Activated naive CD4-positive, alpha-beta T cell treated with anti-CD3 and anti-CD28 coated beads for 36 hours (primary cell): ENCODE measurements at regions of chr1 and their contacts with region 1.

Region 1: GRCh38 chr1:43073490-43074230 is 98.4 kb downstream of the EBNA1BP2 start:
- DNase-seq: peak; percentile 87
- H3K4me3 Mint-ChIP-seq: no peak overlapping the region
- H3K27ac Mint-ChIP-seq: peak overlapping the region; percentile 28
- H3K4me1 Mint-ChIP-seq: peaks cover 4% of the 10 kb centered on the region
- H3K27me3 Mint-ChIP-seq: no peaks in the 10 kb centered on the region

Region 2: DNA sequence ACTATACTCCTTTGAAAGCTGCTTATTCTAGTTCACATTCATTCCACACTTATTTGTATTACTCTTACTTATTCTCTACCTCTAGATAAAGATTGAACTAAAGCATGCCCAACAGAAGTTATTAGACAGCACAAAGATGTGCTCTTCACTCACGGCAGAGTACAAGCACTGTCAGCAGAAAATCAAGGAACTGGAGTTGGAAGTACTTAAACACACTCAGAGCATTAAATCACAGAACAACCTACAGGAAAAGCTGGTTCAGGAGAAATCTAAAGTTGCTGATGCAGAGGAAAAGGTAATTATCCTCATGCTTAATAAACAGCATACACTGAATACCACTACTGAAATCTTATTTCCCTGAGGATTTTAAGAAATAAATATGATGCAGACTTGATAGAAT is 496.7 kb before region 1 on chr1:
- CTCF ChIA-PET with region 1: interaction called, 5 read pairs
- intact Hi-C with region 1: loop called (anchors 2 kb)
- DNase-seq: no peak
- H3K4me3 Mint-ChIP-seq: no peak overlapping the region
- H3K27ac Mint-ChIP-seq: no peak overlapping the region
- H3K4me1 Mint-ChIP-seq: no peaks in the 10 kb centered on the region
- H3K27me3 Mint-ChIP-seq: no peaks in the 10 kb centered on the region

Region 3: DNA sequence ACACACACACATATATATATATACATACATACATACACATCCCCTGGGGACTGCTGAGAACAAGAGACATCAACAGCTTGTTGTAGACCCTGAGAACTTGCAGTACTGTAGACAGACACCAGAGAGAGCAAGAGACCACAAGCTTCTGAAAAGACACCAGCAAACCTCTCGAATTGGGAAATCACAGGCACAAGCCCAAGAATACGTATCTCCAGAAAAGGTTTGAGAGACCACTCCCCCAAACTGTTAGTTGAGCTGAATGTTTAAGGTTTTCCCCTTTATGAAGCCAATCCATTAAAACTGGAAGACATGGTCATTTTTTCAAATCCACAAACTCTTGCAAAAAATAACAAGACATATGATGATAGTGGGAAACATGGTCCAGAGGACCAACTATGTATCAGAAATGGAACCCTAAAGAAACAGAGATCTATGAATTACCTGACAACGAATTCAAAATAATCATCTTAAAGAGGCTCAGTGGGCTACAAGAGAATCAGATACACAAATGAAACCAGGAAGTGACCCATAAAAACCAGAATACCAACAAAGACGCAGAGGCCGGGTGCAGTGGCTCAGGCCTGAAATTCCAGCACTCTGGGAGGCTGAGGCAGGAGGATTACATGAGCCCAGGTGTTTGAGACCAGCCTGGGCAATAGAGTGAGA is 160.1 kb before region 1 on chr1:
- CTCF ChIA-PET with region 1: interaction called, 441 read pairs
- intact Hi-C with region 1: loop called (anchors 1 kb)
- DNase-seq: peak; percentile 76
- H3K4me3 Mint-ChIP-seq: no peak overlapping the region
- H3K27ac Mint-ChIP-seq: no peak overlapping the region
- H3K4me1 Mint-ChIP-seq: peaks cover 2% of the 10 kb centered on the region
- H3K27me3 Mint-ChIP-seq: no peaks in the 10 kb centered on the region

Region 4: DNA sequence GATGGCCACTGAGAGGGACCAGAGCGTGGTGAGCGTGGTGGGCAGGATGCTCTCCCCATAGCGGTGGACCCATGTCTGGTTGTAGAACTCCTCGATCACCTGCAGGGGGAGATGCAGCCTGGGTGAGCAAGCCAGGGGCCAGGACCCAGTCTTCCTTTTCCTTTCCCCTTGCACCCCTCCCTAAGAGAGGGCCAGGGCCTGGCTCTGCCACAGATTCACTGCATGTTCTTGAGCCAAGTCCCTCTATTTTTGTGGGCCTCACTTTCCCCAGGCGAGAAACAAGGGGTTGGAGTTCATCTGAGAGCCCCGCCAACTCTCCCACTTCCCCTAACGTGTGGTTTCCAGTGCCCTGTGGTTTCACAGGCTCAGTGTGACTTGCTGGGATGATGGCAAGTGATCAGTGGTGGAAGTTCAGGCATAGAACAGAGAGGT is 142.5 kb before region 1 on chr1:
- CTCF ChIA-PET with region 1: interaction called, 441 read pairs
- intact Hi-C with region 1: loop called (anchors 1 kb)
- DNase-seq: peak; percentile 65
- H3K4me3 Mint-ChIP-seq: peak overlapping the region; percentile 60
- H3K27ac Mint-ChIP-seq: peak overlapping the region; percentile 97
- H3K4me1 Mint-ChIP-seq: peaks cover 57% of the 10 kb centered on the region
- H3K27me3 Mint-ChIP-seq: no peaks in the 10 kb centered on the region

Region 5: GRCh38 chr1:43007142-43007764 is 66.4 kb before region 1 on chr1:
- CTCF ChIA-PET with region 1: no interaction called
- intact Hi-C with region 1: no loop called
- DNase-seq: no peak
- H3K4me3 Mint-ChIP-seq: no peak overlapping the region
- H3K27ac Mint-ChIP-seq: no peak overlapping the region
- H3K4me1 Mint-ChIP-seq: no peaks in the 10 kb centered on the region
- H3K27me3 Mint-ChIP-seq: no peaks in the 10 kb centered on the region

Region 6: GRCh38 chr1:43035821-43036741 is 37.6 kb before region 1 on chr1:
- CTCF ChIA-PET with region 1: interaction called, 12 read pairs
- intact Hi-C with region 1: no loop called
- DNase-seq: no peak
- H3K4me3 Mint-ChIP-seq: no peak overlapping the region
- H3K27ac Mint-ChIP-seq: peak overlapping the region; percentile 35
- H3K4me1 Mint-ChIP-seq: peaks cover 13% of the 10 kb centered on the region
- H3K27me3 Mint-ChIP-seq: no peaks in the 10 kb centered on the region

Region 7: DNA sequence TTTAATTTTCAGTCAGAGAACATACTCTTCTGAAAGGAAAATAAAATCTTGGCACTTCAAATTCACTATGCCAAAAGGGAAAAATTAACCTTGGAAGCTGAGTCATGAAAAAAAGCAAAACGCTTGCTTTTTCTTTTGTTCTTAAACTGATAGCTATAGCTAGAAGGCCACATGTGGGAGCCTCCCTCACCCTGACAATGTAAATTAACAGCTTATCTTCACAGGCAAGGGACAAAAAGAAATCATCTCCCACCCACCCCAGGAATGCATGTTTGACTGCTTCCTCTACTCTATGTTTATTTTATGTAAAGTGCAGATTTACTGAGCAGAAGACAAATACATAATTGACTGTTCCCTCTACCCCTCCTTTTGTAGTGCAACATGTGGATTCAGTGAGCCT is 60.4 kb after region 1 on chr1:
- CTCF ChIA-PET with region 1: no interaction called
- intact Hi-C with region 1: no loop called
- DNase-seq: no peak
- H3K4me3 Mint-ChIP-seq: no peak overlapping the region
- H3K27ac Mint-ChIP-seq: no peak overlapping the region
- H3K4me1 Mint-ChIP-seq: no peaks in the 10 kb centered on the region
- H3K27me3 Mint-ChIP-seq: peaks cover 11% of the 10 kb centered on the region